CD14-positive monocyte (primary cell): ENCODE measurements at regions of chr12 and their contacts with region 1.

Region 1: DNA sequence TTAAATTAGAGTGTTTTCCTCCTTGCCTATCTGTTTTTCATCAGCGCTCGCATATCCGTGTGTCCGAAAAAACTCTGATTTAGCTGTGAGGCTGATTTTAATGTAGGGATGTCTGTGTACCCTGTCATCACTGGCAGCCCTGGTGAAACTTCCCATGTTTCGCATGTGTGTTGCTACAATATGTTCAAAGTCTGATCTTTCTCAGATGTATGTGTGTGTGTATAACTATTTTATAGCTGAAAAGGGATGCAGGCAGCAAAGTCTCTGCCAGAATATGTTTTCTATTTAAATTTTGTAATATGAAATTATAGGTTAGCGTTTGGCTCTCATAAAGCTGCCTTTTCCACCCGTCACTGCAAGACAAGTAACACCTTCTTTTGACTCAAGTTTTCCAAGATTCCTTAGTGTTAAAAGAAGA is 154.8 kb downstream of the TMTC2 start:
- DNase-seq: no peak
- H3K4me3 ChIP-seq: no peak overlapping the region
- H3K4me3 Mint-ChIP-seq: no peak overlapping the region
- H3K27ac ChIP-seq: no peak overlapping the region
- H3K27ac Mint-ChIP-seq: no peak overlapping the region
- H3K4me1 ChIP-seq: peaks cover 9 to 12% of the 10 kb centered on the region in 2 donors
- H3K4me1 Mint-ChIP-seq: peaks cover 34% of the 10 kb centered on the region
- H3K27me3 ChIP-seq: no peaks in the 10 kb centered on the region
- H3K27me3 Mint-ChIP-seq: no peaks in the 10 kb centered on the region
- CTCF ChIP-seq: no peak

Region 2: DNA sequence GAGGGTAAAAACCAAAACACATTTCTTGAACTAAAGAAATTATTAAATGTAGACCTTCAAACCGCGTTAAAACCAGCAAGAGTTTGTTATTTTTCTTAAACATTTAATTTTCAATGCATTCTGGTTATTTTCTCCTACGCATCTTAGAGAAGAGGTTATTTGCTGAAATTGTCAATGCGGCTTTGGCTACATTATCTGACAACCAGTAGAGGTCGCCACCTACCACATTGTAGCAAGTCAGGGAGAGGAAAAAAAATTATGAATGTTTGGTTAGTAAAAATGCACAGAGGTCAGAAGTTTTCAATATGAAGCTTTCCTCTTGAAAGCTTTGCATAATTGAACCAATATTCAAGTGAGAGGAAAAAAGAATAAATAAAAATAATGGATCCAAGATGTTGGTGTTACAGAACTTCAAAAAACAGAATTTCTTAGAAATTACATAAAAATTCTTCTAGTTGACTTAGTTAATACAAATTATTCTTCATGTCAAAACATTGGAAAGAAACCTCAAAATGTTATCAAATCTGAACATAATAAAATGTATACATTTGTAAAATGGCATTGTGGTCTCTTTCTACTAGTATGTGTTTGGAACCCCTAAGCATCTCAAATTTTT is 314.2 kb before region 1 on chr12:
- intact Hi-C with region 1: no loop called
- DNase-seq: peak; percentile 2 to 23 (median 3)
- H3K4me3 ChIP-seq: no peak overlapping the region
- H3K4me3 Mint-ChIP-seq: no peak overlapping the region
- H3K27ac ChIP-seq: no peak overlapping the region
- H3K27ac Mint-ChIP-seq: no peak overlapping the region
- H3K4me1 ChIP-seq: no peaks in the 10 kb centered on the region
- H3K4me1 Mint-ChIP-seq: no peaks in the 10 kb centered on the region
- H3K27me3 ChIP-seq: no peaks in the 10 kb centered on the region
- H3K27me3 Mint-ChIP-seq: peaks cover 0 to 3% (median 0%) of the 10 kb centered on the region in 3 donors
- CTCF ChIP-seq: peak; percentile 90

Region 3: DNA sequence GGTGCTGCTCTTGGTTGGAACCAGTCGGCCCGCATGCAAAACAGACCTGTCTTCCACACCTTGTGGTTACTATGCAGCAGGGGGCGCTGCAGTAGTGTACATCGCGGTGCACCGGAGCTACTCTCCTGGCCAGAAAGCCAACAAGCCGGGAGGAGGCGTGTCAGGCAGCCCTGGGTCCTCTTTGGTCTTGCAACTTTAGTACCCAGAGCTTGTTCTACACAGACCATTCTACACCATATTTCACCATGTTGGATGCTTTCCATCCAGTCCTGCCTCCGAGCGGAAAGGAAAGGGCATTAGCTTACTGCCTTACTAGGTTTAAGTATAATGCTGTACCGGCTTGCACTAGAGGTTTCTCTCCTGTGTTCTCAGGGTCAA is 155.7 kb before region 1 on chr12:
- intact Hi-C with region 1: loop called in 1 of 2 experiments (anchors 10 kb)
- DNase-seq: peak; percentile 86 to 91 (median 90)
- H3K4me3 ChIP-seq: peak overlapping the region; percentile 73 to 99 (median 93)
- H3K4me3 Mint-ChIP-seq: peak overlapping the region; percentile 90 to 100
- H3K27ac ChIP-seq: peak overlapping the region; percentile 88 to 100
- H3K27ac Mint-ChIP-seq: peak overlapping the region; percentile 92 to 100 (median 98)
- H3K4me1 ChIP-seq: peaks cover 54 to 67% of the 10 kb centered on the region in 2 donors
- H3K4me1 Mint-ChIP-seq: peaks cover 57% of the 10 kb centered on the region
- H3K27me3 ChIP-seq: no peaks in the 10 kb centered on the region
- H3K27me3 Mint-ChIP-seq: peaks cover 0 to 2% (median 2%) of the 10 kb centered on the region in 3 donors
- CTCF ChIP-seq: peak; percentile 91

Region 4: GRCh38 chr12:82919388-82920054 is 78.0 kb after region 1 on chr12:
- intact Hi-C with region 1: no loop called
- DNase-seq: no peak
- H3K4me3 ChIP-seq: no peak overlapping the region
- H3K4me3 Mint-ChIP-seq: no peak overlapping the region
- H3K27ac ChIP-seq: no peak overlapping the region
- H3K27ac Mint-ChIP-seq: no peak overlapping the region
- H3K4me1 ChIP-seq: no peaks in the 10 kb centered on the region
- H3K4me1 Mint-ChIP-seq: no peaks in the 10 kb centered on the region
- H3K27me3 ChIP-seq: no peaks in the 10 kb centered on the region
- H3K27me3 Mint-ChIP-seq: no peaks in the 10 kb centered on the region
- CTCF ChIP-seq: no peak